CD4-positive, alpha-beta memory T cell (primary cell): ENCODE measurements at regions of chr18 and their contacts with region 1.

Region 1: DNA sequence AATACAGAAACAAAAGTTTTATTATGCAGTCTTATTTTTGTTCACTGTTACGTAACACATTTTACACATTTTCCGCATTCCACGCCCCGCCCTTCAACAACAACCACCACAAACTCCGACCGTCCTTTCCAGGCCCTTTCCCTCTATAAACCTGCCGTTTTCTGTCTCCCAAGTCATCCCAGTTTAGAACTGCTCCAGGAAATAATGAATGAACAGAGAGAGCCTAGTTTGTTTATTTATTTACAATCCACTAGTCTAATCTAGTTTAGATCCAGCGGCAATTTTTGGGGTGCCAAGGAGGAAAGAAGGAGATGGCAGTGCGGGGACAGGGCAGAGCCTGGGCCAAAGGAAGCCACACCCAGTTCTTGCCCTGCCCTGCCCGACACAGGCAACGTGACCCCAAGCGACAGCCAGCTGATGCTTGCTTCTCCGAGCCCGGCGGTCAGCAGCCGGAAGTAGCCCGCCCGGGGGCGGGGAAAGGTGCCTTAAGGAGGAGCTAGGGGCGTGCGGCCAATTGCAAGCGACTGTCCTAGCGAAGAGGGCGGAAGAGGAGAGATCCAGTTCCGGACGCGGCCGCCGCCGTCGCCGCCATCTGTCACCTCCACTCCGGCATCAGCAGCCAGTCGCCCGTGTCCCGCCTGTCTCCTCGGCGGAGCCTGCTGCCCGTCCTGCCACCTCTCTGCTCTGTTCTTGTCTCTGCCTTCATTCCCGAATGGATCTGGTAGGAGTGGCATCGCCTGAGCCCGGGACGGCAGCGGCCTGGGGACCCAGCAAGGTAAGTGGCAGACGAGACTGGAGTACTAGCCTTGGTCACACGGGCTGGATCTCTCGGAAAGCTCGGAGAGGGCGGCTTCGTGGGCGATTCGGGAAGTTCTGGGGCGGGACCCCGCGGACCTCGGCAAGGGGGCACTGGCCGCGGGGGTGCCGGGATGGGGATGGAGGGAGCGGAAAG is at the start of gene RIOK3:
- DNase-seq: peak; percentile 79 to 91 (median 82)
- H3K4me3 ChIP-seq: peak within 1 kb of the TSS; percentile 95
- H3K4me3 Mint-ChIP-seq: peak within 1 kb of the TSS; percentile 94 to 100 (median 100)
- H3K27ac ChIP-seq: peak within 1 kb of the TSS; percentile 92
- H3K27ac Mint-ChIP-seq: peak within 1 kb of the TSS; percentile 89 to 98 (median 94)
- H3K4me1 ChIP-seq: peaks cover 41% of the 10 kb centered on the region
- H3K4me1 Mint-ChIP-seq: peaks cover 21 to 54% (median 35%) of the 10 kb centered on the region in 4 donors
- H3K27me3 ChIP-seq: no peaks in the 10 kb centered on the region
- H3K27me3 Mint-ChIP-seq: peaks cover 0 to 1% of the 10 kb centered on the region in 2 donors
- total RNA-seq, gene RIOK3: 73.2 to 84.4 TPM

Region 2: DNA sequence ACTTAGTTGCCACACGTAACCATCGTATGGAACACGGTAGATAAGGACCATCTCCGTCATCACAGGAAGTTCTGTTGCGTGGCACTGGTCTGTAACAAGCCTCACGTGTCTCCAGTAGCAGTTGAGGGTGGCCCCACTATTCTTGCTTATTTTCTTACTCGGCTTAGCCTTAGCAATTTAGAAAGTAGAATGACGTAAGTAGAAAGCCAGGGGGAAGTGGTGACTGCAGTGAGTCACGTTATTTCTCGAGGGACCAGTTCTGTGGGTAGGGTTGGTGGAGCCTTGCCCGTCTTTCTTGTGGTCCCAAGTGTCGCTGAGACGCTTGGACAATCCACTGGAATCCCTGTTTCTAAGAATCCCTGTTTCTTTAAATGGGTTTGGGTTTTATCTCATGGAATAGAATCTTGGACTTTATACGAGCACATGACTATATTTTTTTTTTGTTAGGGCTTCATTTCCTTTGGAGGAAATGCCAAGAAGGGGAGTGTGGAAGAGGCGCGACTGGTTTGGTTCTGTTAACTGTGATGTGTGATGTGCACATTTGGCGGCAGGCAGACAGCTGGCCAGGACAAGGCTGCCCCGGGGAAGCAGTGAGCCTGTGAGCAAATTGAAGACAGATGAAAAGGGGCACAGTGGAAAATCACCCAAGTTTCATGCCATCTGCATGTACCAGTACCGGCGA is 221.5 kb before region 1 on chr18:
- CTCF ChIA-PET with region 1: no interaction called
- POLR2A ChIA-PET with region 1: no interaction called
- intact Hi-C with region 1: loop called (anchors 10 kb)
- DNase-seq: peak; percentile 75 to 93 (median 83)
- H3K4me3 ChIP-seq: peak overlapping the region in 1 of 2 donors; percentile 27
- H3K4me3 Mint-ChIP-seq: peak overlapping the region; percentile 10 to 83 (median 66)
- H3K27ac ChIP-seq: peak overlapping the region; percentile 34
- H3K27ac Mint-ChIP-seq: peak overlapping the region; percentile 93 to 97 (median 95)
- H3K4me1 ChIP-seq: peaks cover 15% of the 10 kb centered on the region
- H3K4me1 Mint-ChIP-seq: peaks cover 8 to 47% (median 17%) of the 10 kb centered on the region in 4 donors
- H3K27me3 ChIP-seq: no peaks in the 10 kb centered on the region
- H3K27me3 Mint-ChIP-seq: no peaks in the 10 kb centered on the region

Region 3: DNA sequence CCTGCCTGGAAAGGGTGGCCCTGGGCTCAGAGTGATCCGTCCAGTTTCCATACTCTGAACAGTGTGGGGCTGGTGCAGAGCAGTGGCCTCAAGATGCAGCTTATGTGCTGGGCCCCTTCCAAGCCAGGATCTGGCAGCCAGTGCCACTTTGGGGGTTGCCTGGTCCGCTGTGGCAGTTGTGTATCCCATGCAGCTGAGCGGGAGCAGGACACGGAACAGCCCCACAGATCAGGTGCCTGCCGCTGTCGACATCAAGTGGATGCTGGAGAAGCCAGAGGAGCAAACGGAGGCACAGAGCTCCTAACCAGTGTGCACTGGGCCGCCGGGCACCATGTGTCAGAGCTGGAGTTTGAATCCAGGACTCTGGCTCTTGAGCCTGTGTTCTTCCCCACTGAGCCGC is 205.7 kb before region 1 on chr18:
- CTCF ChIA-PET with region 1: no interaction called
- POLR2A ChIA-PET with region 1: no interaction called
- intact Hi-C with region 1: no loop called
- DNase-seq: no peak
- H3K4me3 ChIP-seq: no peak overlapping the region
- H3K4me3 Mint-ChIP-seq: no peak overlapping the region
- H3K27ac ChIP-seq: no peak overlapping the region
- H3K27ac Mint-ChIP-seq: peak overlapping the region in 1 of 7 donors; percentile 61
- H3K4me1 ChIP-seq: no peaks in the 10 kb centered on the region
- H3K4me1 Mint-ChIP-seq: peaks cover 0 to 5% (median 0%) of the 10 kb centered on the region in 4 donors
- H3K27me3 ChIP-seq: no peaks in the 10 kb centered on the region
- H3K27me3 Mint-ChIP-seq: no peaks in the 10 kb centered on the region

Region 4: GRCh38 chr18:23281626-23282436 is 171.2 kb before region 1 on chr18:
- CTCF ChIA-PET with region 1: no interaction called
- POLR2A ChIA-PET with region 1: no interaction called
- intact Hi-C with region 1: no loop called
- DNase-seq: no peak
- H3K4me3 ChIP-seq: no peak overlapping the region
- H3K4me3 Mint-ChIP-seq: no peak overlapping the region
- H3K27ac ChIP-seq: no peak overlapping the region
- H3K27ac Mint-ChIP-seq: no peak overlapping the region
- H3K4me1 ChIP-seq: no peaks in the 10 kb centered on the region
- H3K4me1 Mint-ChIP-seq: no peaks in the 10 kb centered on the region
- H3K27me3 ChIP-seq: no peaks in the 10 kb centered on the region
- H3K27me3 Mint-ChIP-seq: no peaks in the 10 kb centered on the region

Region 5: DNA sequence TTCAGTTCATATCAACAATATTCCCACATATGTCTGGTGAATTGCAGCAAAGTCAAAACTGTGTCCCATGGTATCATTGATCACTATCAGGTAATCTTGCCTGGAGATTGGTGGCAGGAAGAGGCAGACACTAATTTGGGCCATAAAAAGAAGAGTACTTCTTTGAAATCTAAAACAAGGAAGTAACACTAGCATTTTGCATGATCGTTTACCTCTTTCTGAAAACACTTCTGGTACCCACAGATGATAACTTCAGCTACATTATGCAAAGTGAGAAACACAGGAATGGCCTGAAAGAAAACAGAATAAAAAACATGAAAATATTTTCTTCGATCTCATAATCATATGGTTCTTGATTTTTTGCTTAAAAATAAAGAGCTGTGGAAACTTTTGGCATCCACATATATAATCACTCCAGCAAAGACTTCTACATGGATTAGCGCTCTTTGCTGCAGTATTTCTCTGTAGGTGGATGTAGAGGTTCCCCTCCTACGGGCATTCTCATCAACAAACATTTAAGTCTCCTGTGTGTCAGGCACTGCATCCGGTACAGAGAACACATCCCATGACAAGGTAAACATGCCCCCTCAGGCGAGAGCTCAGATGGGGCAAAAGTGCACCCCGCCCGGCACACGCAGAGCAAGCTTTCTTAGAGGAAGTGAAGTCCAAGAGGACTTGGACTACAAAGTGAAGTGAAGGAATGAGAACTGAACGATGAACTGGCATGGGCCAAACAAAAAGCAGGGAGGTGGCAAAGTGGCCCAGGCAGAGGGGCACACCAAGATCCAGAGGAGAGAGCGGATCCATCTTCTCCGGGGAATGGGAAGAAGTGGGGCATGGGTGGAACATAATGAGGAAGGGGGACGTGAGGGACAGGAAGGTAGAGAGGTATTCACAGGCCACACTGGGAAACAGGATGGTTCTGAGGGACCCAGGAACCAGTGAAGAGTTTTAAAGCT is 67.9 kb before region 1 on chr18:
- CTCF ChIA-PET with region 1: no interaction called
- POLR2A ChIA-PET with region 1: no interaction called
- intact Hi-C with region 1: no loop called
- DNase-seq: no peak
- H3K4me3 ChIP-seq: no peak overlapping the region
- H3K4me3 Mint-ChIP-seq: peak overlapping the region in 3 of 8 donors; percentile 8 to 29 (median 28)
- H3K27ac ChIP-seq: no peak overlapping the region
- H3K27ac Mint-ChIP-seq: peak overlapping the region; percentile 3 to 87 (median 49)
- H3K4me1 ChIP-seq: peaks cover 16% of the 10 kb centered on the region
- H3K4me1 Mint-ChIP-seq: peaks cover 12 to 22% (median 14%) of the 10 kb centered on the region in 4 donors
- H3K27me3 ChIP-seq: no peaks in the 10 kb centered on the region
- H3K27me3 Mint-ChIP-seq: no peaks in the 10 kb centered on the region

Region 6: DNA sequence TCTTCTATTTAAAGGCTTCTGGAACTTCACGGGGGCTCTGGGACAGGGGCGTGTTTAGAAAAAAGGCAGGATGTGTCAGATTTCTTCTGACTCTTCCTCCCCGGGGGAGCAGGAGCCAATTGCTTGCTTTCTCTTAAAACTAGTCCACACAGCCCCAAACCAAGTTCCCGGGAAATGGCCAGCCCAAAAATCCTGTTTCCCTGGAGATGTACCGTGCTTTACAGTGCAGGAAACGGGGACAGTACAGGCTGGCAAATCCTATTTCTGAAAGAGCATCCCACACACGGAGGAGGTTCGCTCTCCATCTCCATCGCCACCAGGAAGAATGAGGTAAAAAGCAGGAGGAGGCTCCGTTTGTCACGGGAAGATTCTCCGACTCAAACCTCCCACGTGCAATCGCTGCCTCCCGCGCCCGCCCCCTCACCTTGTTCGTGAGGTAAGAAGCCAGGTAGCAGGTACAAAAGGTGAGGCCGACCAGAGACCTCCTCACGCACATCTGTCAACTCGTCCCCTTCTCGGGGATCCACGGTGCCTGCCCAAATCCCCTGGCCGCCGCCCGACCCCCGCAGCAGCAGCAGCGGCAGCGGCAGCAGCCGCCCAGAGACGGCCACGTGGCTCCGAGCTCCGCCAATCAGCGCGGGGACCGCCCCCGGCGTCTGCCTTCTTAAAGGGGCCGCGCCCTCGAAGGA is 15.5 kb before region 1 on chr18:
- CTCF ChIA-PET with region 1: interaction called, 5 read pairs
- POLR2A ChIA-PET with region 1: interaction called, 15 read pairs
- intact Hi-C with region 1: loop called (anchors 1 kb)
- DNase-seq: peak; percentile 61 to 77 (median 67)
- H3K4me3 ChIP-seq: peak overlapping the region; percentile 3 to 89
- H3K4me3 Mint-ChIP-seq: peak overlapping the region; percentile 89 to 90 (median 90)
- H3K27ac ChIP-seq: peak overlapping the region; percentile 46
- H3K27ac Mint-ChIP-seq: peak overlapping the region in 6 of 7 donors; percentile 27 to 78 (median 69)
- H3K4me1 ChIP-seq: peaks cover 16% of the 10 kb centered on the region
- H3K4me1 Mint-ChIP-seq: peaks cover 7 to 16% (median 11%) of the 10 kb centered on the region in 4 donors
- H3K27me3 ChIP-seq: no peaks in the 10 kb centered on the region
- H3K27me3 Mint-ChIP-seq: peaks cover 2 to 3% of the 10 kb centered on the region in 2 donors

Region 7: DNA sequence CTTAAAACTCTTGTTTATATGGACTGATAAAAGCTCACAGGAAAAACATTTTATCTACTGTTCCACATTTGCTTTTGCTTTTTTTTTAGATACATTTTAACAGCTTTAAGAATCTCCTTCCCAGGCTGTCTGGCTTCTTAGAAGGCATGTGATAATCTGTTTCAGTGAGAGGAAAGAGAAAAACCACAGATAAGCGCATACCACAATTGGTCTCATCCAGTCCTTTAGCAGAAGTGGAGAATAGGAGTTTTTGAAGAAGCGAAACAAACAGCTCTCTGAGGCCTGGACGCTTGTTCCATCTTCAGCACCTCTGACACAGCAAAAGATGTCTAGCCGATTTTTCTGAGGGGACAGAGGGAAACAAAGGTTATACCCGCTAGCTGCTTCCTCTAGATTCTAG is 87.9 kb after region 1 on chr18:
- CTCF ChIA-PET with region 1: no interaction called
- POLR2A ChIA-PET with region 1: no interaction called
- intact Hi-C with region 1: no loop called
- DNase-seq: peak in 4 of 5 donors; percentile 32 to 50 (median 44)
- H3K4me3 ChIP-seq: no peak overlapping the region
- H3K4me3 Mint-ChIP-seq: peak overlapping the region; percentile 21 to 86 (median 72)
- H3K27ac ChIP-seq: peak overlapping the region; percentile 45
- H3K27ac Mint-ChIP-seq: peak overlapping the region; percentile 71 to 96 (median 90)
- H3K4me1 ChIP-seq: peaks cover 36% of the 10 kb centered on the region
- H3K4me1 Mint-ChIP-seq: peaks cover 29 to 43% (median 36%) of the 10 kb centered on the region in 4 donors
- H3K27me3 ChIP-seq: no peaks in the 10 kb centered on the region
- H3K27me3 Mint-ChIP-seq: no peaks in the 10 kb centered on the region